Activated CD4-positive, alpha-beta T cell treated with anti-CD3 and anti-CD28 coated beads, Interleukin-2, amount 10 ng/mL, durations not matched to agents 24 days and 14 days (primary cell): ENCODE measurements at regions of chr2 and their contacts with region 1.

Region 1: DNA sequence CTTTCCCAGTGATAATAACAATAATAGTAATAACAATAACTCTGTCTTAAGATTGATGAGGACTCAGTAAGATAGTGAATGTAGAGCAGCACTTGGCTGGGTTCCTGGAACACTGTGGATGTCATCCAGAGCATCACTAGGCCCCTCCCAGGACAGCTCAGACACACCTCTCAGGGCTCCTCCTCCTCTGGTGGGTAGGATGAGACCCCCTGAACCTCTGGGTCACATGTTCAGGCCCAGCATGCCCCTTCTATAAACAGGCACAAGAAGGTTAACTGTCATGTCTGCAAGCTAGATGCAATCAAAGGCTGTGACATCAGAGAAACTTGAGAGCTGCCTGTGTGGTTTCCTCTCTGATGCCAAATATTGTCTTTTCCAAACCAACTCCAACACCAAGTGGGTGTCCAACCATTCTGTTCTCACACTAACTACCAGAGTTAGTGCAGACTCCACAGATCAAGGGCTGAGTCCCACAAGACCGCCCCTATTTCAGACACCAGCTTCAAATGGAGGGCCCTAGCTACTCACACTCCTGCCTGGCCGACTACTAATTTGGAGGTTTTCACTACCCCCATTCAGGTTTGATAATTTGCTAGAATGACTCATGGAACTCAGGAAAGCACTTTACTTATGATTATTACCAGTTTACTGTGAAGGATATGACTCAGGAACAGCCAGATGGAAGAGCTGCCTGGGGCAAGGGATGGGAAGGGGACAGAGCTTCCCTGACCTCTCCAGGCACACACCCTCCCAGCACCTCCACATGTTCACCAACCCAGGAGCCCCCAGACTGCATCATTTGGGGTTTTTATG is 46.4 kb upstream of the BZW1 start:
- DNase-seq: peak; percentile 68
- H3K4me3 Mint-ChIP-seq: peak overlapping the region; percentile 39
- H3K27ac Mint-ChIP-seq: peak overlapping the region; percentile 90
- H3K4me1 Mint-ChIP-seq: peaks cover 27% of the 10 kb centered on the region
- H3K27me3 Mint-ChIP-seq: no peaks in the 10 kb centered on the region

Region 2: GRCh38 chr2:200670313-200670712 is 95.0 kb before region 1 on chr2:
- intact Hi-C with region 1: no loop called
- DNase-seq: no peak
- H3K4me3 Mint-ChIP-seq: no peak overlapping the region
- H3K27ac Mint-ChIP-seq: no peak overlapping the region
- H3K4me1 Mint-ChIP-seq: peaks cover 12% of the 10 kb centered on the region
- H3K27me3 Mint-ChIP-seq: no peaks in the 10 kb centered on the region

Region 3: DNA sequence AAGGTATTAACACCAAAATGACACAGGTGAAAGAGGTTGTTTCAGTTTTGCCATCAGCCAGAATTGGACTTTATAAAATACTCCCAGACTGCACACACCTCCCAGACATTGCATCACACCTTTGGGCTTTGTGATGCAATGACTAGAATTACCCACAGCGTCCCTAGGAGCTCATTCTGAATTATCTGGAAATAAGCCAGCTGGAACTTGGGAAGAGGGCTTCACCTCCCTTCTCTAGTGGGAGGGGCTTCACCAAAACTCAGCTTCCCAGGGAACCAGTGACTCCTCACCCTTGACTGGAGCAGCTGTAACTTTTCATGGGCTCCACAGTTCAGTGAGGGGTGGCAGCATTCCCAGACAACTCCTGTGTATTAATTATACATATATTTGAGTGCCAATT is 36.7 kb before region 1 on chr2:
- intact Hi-C with region 1: loop called (anchors 5 kb)
- DNase-seq: no peak
- H3K4me3 Mint-ChIP-seq: no peak overlapping the region
- H3K27ac Mint-ChIP-seq: no peak overlapping the region
- H3K4me1 Mint-ChIP-seq: peaks cover 10% of the 10 kb centered on the region
- H3K27me3 Mint-ChIP-seq: peaks cover 17% of the 10 kb centered on the region

Region 4: GRCh38 chr2:200735061-200735460 is 30.3 kb before region 1 on chr2:
- intact Hi-C with region 1: loop called (anchors 1 kb)
- DNase-seq: no peak
- H3K4me3 Mint-ChIP-seq: no peak overlapping the region
- H3K27ac Mint-ChIP-seq: no peak overlapping the region
- H3K4me1 Mint-ChIP-seq: peaks cover 14% of the 10 kb centered on the region
- H3K27me3 Mint-ChIP-seq: peaks cover 9% of the 10 kb centered on the region